Activated CD4-positive, alpha-beta T cell treated with anti-CD3 and anti-CD28 coated beads, Interleukin-2, amount 10 ng/mL, durations not matched to agents 7 days and 5 days (primary cell): ENCODE measurements at regions of chr10 and their contacts with region 1.

Region 1: GRCh38 chr10:93445097-93445960 is 36.8 kb downstream of the MYOF start:
- DNase-seq: no peak
- H3K4me3 Mint-ChIP-seq: no peak overlapping the region
- H3K27ac Mint-ChIP-seq: no peak overlapping the region
- H3K4me1 Mint-ChIP-seq: no peaks in the 10 kb centered on the region
- H3K27me3 Mint-ChIP-seq: no peaks in the 10 kb centered on the region

Region 2: DNA sequence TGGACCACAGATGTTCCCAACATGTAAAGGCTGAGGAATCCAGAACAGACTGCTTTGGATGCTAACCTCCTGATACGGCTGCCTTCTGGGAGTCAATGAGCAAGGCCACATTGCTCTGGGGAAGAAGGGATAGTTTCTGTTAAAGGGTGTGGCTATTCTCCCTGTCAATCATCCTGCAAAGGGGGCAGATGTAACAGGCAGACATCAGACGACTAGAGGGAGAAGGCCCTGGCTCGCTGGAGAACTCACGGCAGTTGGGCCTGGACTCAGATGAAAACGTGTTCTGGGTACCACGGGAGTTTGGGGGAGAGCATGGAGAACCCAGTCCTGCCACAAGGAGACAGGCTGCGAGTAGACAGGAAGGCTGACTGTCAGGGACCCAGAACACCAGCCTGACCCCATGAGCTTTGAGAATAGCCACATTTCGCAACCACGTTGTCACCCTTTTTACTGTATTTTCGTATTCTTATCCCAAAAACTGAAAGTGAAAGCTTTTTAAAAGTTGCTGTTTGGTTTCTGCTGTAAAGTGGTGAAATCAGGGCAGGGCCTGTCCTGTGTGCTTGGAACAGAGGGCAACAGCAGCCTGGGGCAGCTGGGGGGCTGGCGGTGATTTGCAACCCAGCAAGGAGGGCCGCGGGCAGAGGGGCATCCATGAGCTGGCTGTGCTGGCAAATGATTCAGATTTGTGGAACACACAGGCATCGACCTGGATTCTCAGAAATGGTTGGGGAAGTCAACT is 58.5 kb before region 1 on chr10:
- CTCF ChIA-PET with region 1: interaction called, 3 read pairs
- POLR2A ChIA-PET with region 1: interaction called, 13 read pairs
- DNase-seq: peak; percentile 21
- H3K4me3 Mint-ChIP-seq: peak overlapping the region; percentile 1
- H3K27ac Mint-ChIP-seq: peak overlapping the region; percentile 92
- H3K4me1 Mint-ChIP-seq: peaks cover 29% of the 10 kb centered on the region
- H3K27me3 Mint-ChIP-seq: no peaks in the 10 kb centered on the region

Region 3: DNA sequence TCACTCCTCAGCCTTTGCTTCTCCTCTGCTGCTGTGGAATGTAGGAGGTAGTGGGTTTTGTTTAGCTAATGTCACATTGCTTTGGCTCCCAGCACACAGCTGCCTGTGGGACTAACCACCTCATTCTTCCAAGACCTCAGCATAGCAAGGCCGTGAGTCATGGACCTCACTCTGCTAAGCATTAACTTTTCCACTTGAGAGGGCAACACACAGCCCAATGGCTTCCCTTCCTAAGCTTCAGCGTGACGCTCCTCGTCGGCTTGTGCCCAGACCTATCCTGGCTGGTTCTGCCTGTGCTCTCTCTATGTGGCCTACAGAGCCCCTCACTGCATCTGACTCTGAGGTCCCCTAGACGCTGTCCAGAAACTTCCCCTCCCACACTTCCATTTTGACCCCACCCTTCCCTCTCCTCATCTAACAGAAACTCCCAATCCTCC is 13.5 kb after region 1 on chr10:
- CTCF ChIA-PET with region 1: interaction called, 14 read pairs
- POLR2A ChIA-PET with region 1: no interaction called
- DNase-seq: no peak
- H3K4me3 Mint-ChIP-seq: no peak overlapping the region
- H3K27ac Mint-ChIP-seq: no peak overlapping the region
- H3K4me1 Mint-ChIP-seq: peaks cover 16% of the 10 kb centered on the region
- H3K27me3 Mint-ChIP-seq: no peaks in the 10 kb centered on the region

Region 4: GRCh38 chr10:93639791-93640190 is 194.5 kb after region 1 on chr10:
- CTCF ChIA-PET with region 1: no interaction called
- POLR2A ChIA-PET with region 1: no interaction called
- DNase-seq: no peak
- H3K4me3 Mint-ChIP-seq: no peak overlapping the region
- H3K27ac Mint-ChIP-seq: no peak overlapping the region
- H3K4me1 Mint-ChIP-seq: no peaks in the 10 kb centered on the region
- H3K27me3 Mint-ChIP-seq: peaks cover 13% of the 10 kb centered on the region